Naive thymus-derived CD4-positive, alpha-beta T cell (primary cell): ENCODE measurements at regions of chr5 and their contacts with region 1.

Region 1: GRCh38 chr5:140664359-140665119 is at the start of gene WDR55:
- DNase-seq: peak; percentile 91 to 98 (median 94)
- ATAC-seq: peak; percentile 97
- H3K4me3 ChIP-seq: peak within 1 kb of the TSS; percentile 95
- H3K4me3 Mint-ChIP-seq: peak within 1 kb of the TSS; percentile 96 to 100 (median 98)
- H3K27ac ChIP-seq: peak within 1 kb of the TSS; percentile 97
- H3K27ac Mint-ChIP-seq: peak within 1 kb of the TSS; percentile 93 to 100 (median 98)
- H3K4me1 ChIP-seq: peaks cover 0 to 8% of the 10 kb centered on the region in 2 donors
- H3K4me1 Mint-ChIP-seq: peaks cover 17 to 48% (median 38%) of the 10 kb centered on the region in 7 donors
- H3K27me3 ChIP-seq: no peaks in the 10 kb centered on the region
- H3K27me3 Mint-ChIP-seq: no peaks in the 10 kb centered on the region
- total RNA-seq, gene WDR55: 28.5 to 47.6 (median 37.8) TPM

Region 2: DNA sequence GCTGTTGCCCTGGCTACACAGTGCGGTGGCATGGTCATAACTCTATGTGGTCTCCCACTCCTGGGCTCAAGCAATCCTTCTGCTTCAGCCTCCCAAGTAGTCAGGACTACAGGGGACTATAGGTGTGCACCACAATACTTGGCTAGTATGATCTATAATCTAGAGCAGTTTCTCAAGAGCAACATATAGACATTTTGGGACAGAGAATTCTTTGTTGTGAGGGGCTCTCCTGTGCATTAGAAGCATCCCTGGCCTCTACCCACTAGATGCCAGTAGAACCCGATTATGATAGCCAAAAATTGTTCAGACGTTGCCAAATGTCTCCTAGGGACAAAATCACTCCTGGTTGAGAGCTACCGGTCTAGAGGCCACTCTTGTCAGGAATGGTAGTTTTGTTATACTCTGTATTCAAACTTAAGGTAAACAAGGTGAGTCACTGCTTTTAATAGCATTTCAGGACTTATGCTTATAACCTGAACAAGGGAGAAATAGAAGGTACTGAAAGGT is 255.7 kb before region 1 on chr5:
- CTCF ChIA-PET with region 1: no interaction called
- POLR2A ChIA-PET with region 1: no interaction called
- intact Hi-C with region 1: no loop called
- DNase-seq: no peak
- ATAC-seq: no peak
- H3K4me3 ChIP-seq: no peak overlapping the region
- H3K4me3 Mint-ChIP-seq: peak overlapping the region in 8 of 10 donors; percentile 8 to 60 (median 30)
- H3K27ac ChIP-seq: no peak overlapping the region
- H3K27ac Mint-ChIP-seq: peak overlapping the region in 3 of 9 donors; percentile 31 to 41 (median 36)
- H3K4me1 ChIP-seq: peaks cover 14 to 24% of the 10 kb centered on the region in 2 donors
- H3K4me1 Mint-ChIP-seq: peaks cover 32 to 78% (median 56%) of the 10 kb centered on the region in 7 donors
- H3K27me3 ChIP-seq: no peaks in the 10 kb centered on the region
- H3K27me3 Mint-ChIP-seq: no peaks in the 10 kb centered on the region

Region 3: GRCh38 chr5:140632150-140633020 is 32.2 kb before region 1 on chr5:
- CTCF ChIA-PET with region 1: no interaction called
- POLR2A ChIA-PET with region 1: interaction called, 4 read pairs
- intact Hi-C with region 1: loop called in 1 of 2 experiments (anchors 1 kb)
- DNase-seq: peak; percentile 29 to 64 (median 51)
- ATAC-seq: peak; percentile 81
- H3K4me3 ChIP-seq: peak overlapping the region; percentile 87
- H3K4me3 Mint-ChIP-seq: peak overlapping the region; percentile 89 to 99 (median 92)
- H3K27ac ChIP-seq: peak overlapping the region; percentile 41
- H3K27ac Mint-ChIP-seq: peak overlapping the region; percentile 29 to 88 (median 79)
- H3K4me1 ChIP-seq: peaks cover 0 to 9% of the 10 kb centered on the region in 2 donors
- H3K4me1 Mint-ChIP-seq: peaks cover 16 to 36% (median 17%) of the 10 kb centered on the region in 7 donors
- H3K27me3 ChIP-seq: no peaks in the 10 kb centered on the region
- H3K27me3 Mint-ChIP-seq: peaks cover 0 to 26% (median 0%) of the 10 kb centered on the region in 5 donors

Region 4: GRCh38 chr5:140690941-140691924 is 26.7 kb after region 1 on chr5 and contains the starts of genes HARS1 and HARS2:
- CTCF ChIA-PET with region 1: no interaction called
- POLR2A ChIA-PET with region 1: interaction called, 13 read pairs
- intact Hi-C with region 1: loop called (anchors 1 kb)
- DNase-seq: peak; percentile 55 to 83 (median 71)
- ATAC-seq: peak; percentile 97
- H3K4me3 ChIP-seq: peak within 1 kb of the TSS; percentile 91
- H3K4me3 Mint-ChIP-seq: peak within 1 kb of the TSS; percentile 92 to 100 (median 99)
- H3K27ac ChIP-seq: peak within 1 kb of the TSS; percentile 89
- H3K27ac Mint-ChIP-seq: peak within 1 kb of the TSS; percentile 91 to 99 (median 98)
- H3K4me1 ChIP-seq: peaks cover 16 to 22% of the 10 kb centered on the region in 2 donors
- H3K4me1 Mint-ChIP-seq: peaks cover 29 to 60% (median 53%) of the 10 kb centered on the region in 7 donors
- H3K27me3 ChIP-seq: no peaks in the 10 kb centered on the region
- H3K27me3 Mint-ChIP-seq: no peaks in the 10 kb centered on the region
- total RNA-seq, gene HARS1: 48.7 to 85.7 (median 68.5) TPM
- total RNA-seq, gene HARS2: 25.4 to 59.6 (median 38.8) TPM

Region 5: DNA sequence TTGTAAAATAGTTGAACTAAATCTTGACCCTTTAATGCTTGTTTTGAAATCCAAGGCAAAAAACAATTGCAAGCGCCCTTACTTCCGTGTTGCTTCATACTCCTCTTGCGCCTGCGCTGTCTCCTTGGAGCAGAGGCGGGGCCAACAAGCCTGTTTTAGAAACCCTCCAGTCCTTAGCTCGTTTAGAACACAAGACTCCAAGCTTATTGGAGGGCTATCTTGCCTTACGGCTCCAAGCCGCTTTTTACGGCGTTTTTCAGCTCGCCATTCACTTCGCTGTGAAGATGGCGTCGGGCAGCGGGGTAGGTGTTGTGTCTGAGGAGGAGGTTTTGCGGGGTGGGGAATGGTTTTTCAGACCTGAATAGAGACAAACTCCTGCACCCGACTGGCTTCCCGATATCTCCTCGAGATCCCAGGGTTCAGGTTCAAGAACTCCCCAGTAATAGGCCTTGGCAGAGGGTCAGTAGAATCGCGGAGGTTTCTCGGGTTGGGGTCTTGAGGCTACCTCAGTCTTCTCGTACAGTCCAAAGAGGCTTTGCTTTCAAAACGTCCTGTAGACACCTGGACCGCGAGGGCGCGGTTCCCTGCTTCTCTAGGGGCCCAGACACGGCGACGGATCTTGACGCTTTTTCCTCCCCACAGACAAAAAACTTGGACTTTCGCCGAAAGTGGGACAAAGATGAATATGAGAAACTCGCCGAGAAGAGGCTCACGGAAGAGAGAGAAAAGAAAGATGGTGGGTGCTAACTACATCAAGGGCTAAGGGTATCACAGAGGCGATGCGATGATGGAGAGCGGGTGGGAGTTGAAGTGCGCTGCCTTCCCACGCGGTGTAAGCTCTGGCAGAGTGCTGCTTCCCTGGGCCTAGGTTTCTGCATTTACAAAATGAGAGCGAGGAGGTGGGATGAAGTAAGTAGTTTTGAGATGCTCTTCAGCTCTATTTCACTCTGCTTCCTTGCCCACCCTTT is 35.9 kb after region 1 on chr5 and contains the start of gene ZMAT2:
- CTCF ChIA-PET with region 1: no interaction called
- POLR2A ChIA-PET with region 1: interaction called, 6 read pairs
- intact Hi-C with region 1: loop called (anchors 1 kb)
- DNase-seq: peak; percentile 74 to 97 (median 92)
- ATAC-seq: peak; percentile 100
- H3K4me3 ChIP-seq: peak within 1 kb of the TSS; percentile 78
- H3K4me3 Mint-ChIP-seq: peak within 1 kb of the TSS; percentile 93 to 100 (median 98)
- H3K27ac ChIP-seq: peak within 1 kb of the TSS; percentile 87
- H3K27ac Mint-ChIP-seq: peak within 1 kb of the TSS; percentile 90 to 99 (median 97)
- H3K4me1 ChIP-seq: peaks cover 4 to 14% of the 10 kb centered on the region in 2 donors
- H3K4me1 Mint-ChIP-seq: peaks cover 18 to 35% (median 29%) of the 10 kb centered on the region in 7 donors
- H3K27me3 ChIP-seq: no peaks in the 10 kb centered on the region
- H3K27me3 Mint-ChIP-seq: no peaks in the 10 kb centered on the region
- total RNA-seq, gene ZMAT2: 37.7 to 63.0 (median 55.1) TPM